Ovary (tissue), 10 donors: ENCODE measurements at regions of chr11 and their contacts with region 1.

Region 1: GRCh38 chr11:6196396-6196795 is 2.6 kb upstream of the OR52W1 start:
- DNase-seq: no peak
- H3K4me3 ChIP-seq: no peak overlapping the region
- H3K27ac ChIP-seq: no peak overlapping the region
- H3K4me1 ChIP-seq: no peaks in the 10 kb centered on the region
- H3K27me3 ChIP-seq: no peaks in the 10 kb centered on the region
- CTCF ChIP-seq: no peak
- EP300 ChIP-seq: no peak
- POLR2A ChIP-seq: no peak

Region 2: DNA sequence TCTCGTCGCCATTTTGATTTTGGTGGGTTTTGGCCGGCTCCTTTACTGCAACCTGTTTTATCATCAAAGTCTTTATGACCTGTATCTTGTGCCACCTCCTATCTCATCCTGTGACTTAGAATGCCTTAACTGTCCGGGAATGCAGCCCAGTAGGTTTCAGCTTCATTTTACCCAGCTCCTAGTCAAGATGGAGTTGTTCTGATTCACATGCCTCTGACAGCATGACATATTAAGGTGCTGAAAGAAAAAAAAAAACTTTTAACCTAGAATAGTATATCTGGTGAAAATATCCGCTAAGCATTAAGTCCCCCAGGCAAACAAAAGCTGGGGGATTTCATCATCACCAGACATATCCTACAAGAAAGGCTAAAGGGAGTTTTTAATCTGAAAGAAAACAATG is 35.3 kb before region 1 on chr11:
- intact Hi-C with region 1: loop called in 1 of 4 experiments (anchors 2 kb)
- DNase-seq: no peak
- H3K4me3 ChIP-seq: no peak overlapping the region
- H3K27ac ChIP-seq: no peak overlapping the region
- H3K4me1 ChIP-seq: no peaks in the 10 kb centered on the region
- H3K27me3 ChIP-seq: no peaks in the 10 kb centered on the region
- CTCF ChIP-seq: no peak
- EP300 ChIP-seq: no peak
- POLR2A ChIP-seq: no peak

Region 3: DNA sequence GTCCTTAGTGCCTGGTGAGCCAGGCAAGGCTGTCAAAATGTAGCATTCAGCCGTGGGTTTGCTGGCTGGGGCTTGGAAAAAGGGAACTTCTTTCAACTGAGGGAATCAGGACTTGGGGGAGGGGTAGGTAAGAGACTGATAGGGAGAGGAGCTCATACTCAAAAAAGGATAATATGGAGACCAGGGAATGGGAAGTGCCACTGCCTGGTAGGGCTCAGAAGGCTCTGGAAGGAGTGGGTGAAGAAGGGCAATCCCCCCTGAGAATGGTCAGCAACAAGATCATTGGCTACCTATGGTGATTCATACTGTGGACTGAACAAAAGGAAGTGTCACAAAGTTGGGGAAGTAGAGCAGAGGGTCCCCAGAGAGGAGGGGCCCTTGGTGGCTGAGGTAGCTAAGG is 44.4 kb after region 1 on chr11:
- intact Hi-C with region 1: loop called in 1 of 4 experiments (anchors 5 kb)
- DNase-seq: no peak
- H3K4me3 ChIP-seq: no peak overlapping the region
- H3K27ac ChIP-seq: no peak overlapping the region
- H3K4me1 ChIP-seq: no peaks in the 10 kb centered on the region
- H3K27me3 ChIP-seq: no peaks in the 10 kb centered on the region
- CTCF ChIP-seq: no peak
- EP300 ChIP-seq: no peak
- POLR2A ChIP-seq: no peak

Region 4: DNA sequence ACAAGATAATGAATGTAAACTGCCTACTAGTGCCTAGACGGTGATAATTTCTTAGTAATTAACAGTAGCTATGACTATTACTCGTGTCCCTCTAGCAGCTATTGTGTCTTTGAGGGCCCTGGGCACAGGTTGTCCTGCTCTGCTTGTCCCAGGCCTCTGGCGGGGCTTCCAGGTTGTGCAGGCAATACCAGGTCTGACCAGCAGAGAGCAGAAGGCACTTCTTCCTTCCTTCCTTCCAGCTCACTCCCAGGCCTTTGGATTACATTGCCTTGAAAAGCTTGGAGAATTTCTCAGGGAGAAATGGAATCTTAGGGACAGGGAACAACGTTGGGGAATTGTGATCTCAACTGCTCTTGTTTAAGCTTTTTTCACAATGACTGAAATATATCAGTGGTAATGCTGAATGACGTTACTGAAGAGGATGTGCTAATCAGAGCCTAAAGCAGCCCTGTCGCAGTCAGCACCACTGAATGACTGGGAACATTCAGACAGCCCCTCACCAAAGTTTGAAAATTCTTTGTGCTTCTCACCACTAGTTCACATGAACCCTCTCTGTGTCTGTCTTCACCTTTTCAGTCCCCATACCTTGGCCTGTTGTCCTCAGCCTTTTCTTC is 54.8 kb after region 1 on chr11:
- intact Hi-C with region 1: no loop called
- DNase-seq: peak; percentile 62 to 80 (median 78)
- H3K4me3 ChIP-seq: no peak overlapping the region
- H3K27ac ChIP-seq: peak overlapping the region; percentile 22 to 84
- H3K4me1 ChIP-seq: peaks cover 11% of the 10 kb centered on the region
- H3K27me3 ChIP-seq: no peaks in the 10 kb centered on the region
- CTCF ChIP-seq: peak; percentile 39 to 89 (median 64)
- EP300 ChIP-seq: no peak
- POLR2A ChIP-seq: no peak